ENCODE measurements at regions of chr7 and their contacts with region 1.

Region 1: DNA sequence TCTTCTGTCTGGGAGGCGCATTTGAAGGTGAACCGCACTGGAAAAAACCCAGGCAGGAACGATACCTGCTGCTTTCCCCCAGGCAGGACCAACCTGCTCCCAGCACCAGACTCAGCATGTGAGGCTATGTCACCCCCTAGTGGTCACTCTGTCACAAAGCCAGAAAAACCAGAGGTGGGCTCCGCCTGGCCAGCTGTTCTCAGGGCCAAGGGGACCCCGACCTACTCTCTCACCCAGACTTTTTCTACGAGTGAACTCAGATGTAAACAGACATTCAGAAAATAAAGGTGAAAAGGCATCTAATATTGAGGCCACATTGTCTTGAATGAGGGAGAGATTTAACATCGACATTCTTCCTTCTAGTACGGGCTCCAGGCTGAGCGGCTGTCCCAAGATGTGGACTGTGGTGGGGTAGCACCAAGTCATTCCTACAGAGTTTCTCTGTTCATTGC is 117.3 kb downstream of the PRKAG2 start:
- DNase-seq: peak; percentile 57 to 77 (median 65)
- H3K4me3 ChIP-seq: no peak overlapping the region
- H3K27ac ChIP-seq: no peak overlapping the region
- H3K4me1 ChIP-seq: peaks cover under 1 to 24% of the 10 kb centered on the region in 2 donors
- H3K27me3 ChIP-seq: no peaks in the 10 kb centered on the region
- CTCF ChIP-seq: peak; percentile 79 to 94 (median 84)
- POLR2A ChIP-seq: no peak

Region 2: DNA sequence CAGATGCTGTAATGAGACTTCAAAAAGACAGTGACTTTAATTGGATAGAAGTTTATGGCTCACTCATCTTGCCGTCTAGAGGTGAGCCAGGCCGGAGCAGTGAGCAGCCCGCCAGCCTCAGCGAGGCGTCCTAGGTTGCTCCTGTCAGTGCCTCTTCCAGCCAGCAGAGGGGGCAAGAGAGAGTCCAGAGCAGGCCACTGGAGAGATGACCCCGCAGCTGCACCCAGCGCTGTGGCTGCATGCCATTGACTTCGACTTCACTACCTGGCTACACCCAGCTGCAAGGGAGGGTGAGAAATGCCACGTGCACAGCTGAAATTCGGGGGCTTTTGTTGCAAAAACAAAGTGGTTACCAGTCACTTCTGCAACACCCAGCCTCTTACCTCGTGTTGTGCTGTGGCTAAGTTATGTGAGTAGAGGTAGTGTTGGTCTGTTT is 391.5 kb before region 1 on chr7:
- intact Hi-C with region 1: loop called (anchors 5 to 10 kb)
- DNase-seq: peak; percentile 85 to 94 (median 90)
- H3K4me3 ChIP-seq: no peak overlapping the region
- H3K27ac ChIP-seq: peak overlapping the region in 2 of 5 donors; percentile 37 to 57
- H3K4me1 ChIP-seq: peaks cover 0 to 6% of the 10 kb centered on the region in 2 donors
- H3K27me3 ChIP-seq: no peaks in the 10 kb centered on the region
- CTCF ChIP-seq: peak; percentile 87 to 97 (median 93)
- POLR2A ChIP-seq: no peak

Region 3: GRCh38 chr7:151566897-151567320 is 192.7 kb before region 1 on chr7:
- intact Hi-C with region 1: loop called (anchors 5 kb)
- DNase-seq: no peak
- H3K4me3 ChIP-seq: no peak overlapping the region
- H3K27ac ChIP-seq: peak overlapping the region in 1 of 5 donors; percentile 18
- H3K4me1 ChIP-seq: no peaks in the 10 kb centered on the region
- H3K27me3 ChIP-seq: no peaks in the 10 kb centered on the region
- CTCF ChIP-seq: no peak
- POLR2A ChIP-seq: no peak

Region 4: GRCh38 chr7:151626422-151627115 is 133.0 kb before region 1 on chr7:
- intact Hi-C with region 1: loop called in 1 of 2 experiments (anchors 10 kb)
- DNase-seq: peak in 5 of 7 donors; percentile 22 to 78 (median 33)
- H3K4me3 ChIP-seq: no peak overlapping the region
- H3K27ac ChIP-seq: no peak overlapping the region
- H3K4me1 ChIP-seq: peaks cover 0 to 9% of the 10 kb centered on the region in 2 donors
- H3K27me3 ChIP-seq: no peaks in the 10 kb centered on the region
- CTCF ChIP-seq: peak in 4 of 6 experiments; percentile 25 to 40 (median 32)
- POLR2A ChIP-seq: no peak

Region 5: DNA sequence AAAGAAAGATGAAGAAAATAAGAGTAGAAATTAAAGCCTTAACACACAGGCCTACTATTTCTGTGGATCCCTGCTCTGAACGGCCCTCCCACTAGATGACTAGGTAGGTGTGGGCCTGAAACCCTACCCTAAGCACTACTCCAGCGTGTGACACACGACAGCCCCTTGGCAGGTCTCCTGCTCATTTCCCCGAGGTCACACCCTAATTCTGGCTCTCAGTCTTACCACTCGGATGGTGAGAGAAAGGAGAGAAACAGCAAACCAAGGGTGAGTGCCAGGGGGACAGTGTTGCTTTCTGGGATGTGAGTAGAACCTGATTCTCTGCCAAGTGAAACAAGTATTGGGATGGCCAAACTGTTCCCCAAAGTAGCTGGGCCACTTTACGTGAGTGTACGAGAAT is 208.7 kb after region 1 on chr7:
- intact Hi-C with region 1: no loop called
- DNase-seq: no peak
- H3K4me3 ChIP-seq: no peak overlapping the region
- H3K27ac ChIP-seq: no peak overlapping the region
- H3K4me1 ChIP-seq: no peaks in the 10 kb centered on the region
- H3K27me3 ChIP-seq: no peaks in the 10 kb centered on the region
- CTCF ChIP-seq: no peak
- POLR2A ChIP-seq: no peak

Measured in adrenal gland (tissue), 19 donors.